ENCODE measurements at regions of chr1 and their contacts with region 1.

Region 1: DNA sequence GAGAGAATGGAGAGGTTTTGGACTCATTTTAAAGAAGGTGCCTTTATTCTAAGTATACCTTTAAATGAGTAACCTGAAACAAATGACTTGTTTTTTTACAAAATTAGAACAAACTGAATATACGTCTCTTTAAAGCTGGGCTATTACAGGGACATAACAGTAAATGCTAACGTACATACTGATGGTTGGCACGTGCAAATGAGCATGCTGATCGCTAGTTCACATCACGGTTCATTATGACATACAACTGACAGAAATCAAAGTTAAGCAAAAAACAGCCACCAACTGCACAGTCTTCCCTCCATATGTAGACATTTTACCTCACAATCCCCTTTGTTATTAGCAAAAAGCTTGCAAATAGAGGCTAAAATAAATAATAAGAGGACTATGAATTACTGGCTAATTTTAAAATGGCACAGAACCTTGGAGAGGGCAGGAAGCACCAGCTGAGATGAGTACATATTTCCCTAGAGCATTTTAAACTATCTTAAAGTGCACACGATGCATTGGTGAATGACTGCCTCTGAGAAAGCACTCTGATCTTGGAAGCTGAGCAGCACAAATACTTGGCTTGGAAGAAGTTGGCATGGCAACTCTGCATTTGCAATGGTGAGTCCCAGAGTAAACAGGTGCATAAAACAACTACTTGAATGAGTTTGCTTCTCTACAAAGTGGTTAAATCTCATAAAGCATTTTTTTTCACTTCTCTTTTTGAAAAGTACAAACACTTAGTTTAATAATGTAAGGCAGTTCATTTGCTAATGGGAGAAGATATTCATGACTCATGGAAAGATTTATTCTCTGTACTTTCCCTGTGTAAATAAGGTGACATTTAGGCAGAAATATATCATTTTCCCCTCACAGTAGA is 204.7 kb downstream of the LHX8 start:
- DNase-seq: peak; percentile 17
- H3K4me3 Mint-ChIP-seq: no peak overlapping the region
- H3K27ac Mint-ChIP-seq: peak overlapping the region; percentile 20
- H3K4me1 Mint-ChIP-seq: peaks cover 4% of the 10 kb centered on the region
- H3K27me3 Mint-ChIP-seq: no peaks in the 10 kb centered on the region

Region 2: GRCh38 chr1:75327395-75327794 is 11.5 kb before region 1 on chr1:
- CTCF ChIA-PET with region 1: no interaction called
- intact Hi-C with region 1: no loop called
- DNase-seq: no peak
- H3K4me3 Mint-ChIP-seq: no peak overlapping the region
- H3K27ac Mint-ChIP-seq: no peak overlapping the region
- H3K4me1 Mint-ChIP-seq: no peaks in the 10 kb centered on the region
- H3K27me3 Mint-ChIP-seq: no peaks in the 10 kb centered on the region

Region 3: DNA sequence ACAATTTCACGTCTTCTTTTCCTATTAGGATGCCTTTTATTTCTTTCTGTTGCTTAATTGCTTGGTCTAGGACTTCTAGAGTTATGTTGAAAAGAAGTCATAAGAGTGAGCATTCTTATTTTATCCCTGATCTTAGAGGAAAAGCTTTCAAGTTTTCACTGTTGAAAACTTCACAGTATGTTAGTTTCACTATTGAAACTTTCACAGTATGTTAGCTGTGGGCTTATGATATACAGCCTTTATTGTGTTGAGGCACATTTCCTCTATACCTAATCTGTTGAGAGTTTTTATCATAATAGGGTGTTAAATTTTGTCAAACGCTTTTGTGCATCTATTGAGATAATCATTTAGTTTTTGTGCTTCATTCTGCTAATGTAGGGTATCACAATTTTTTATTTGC is 22.4 kb after region 1 on chr1:
- CTCF ChIA-PET with region 1: no interaction called
- intact Hi-C with region 1: loop called (anchors 2 kb)
- DNase-seq: no peak
- H3K4me3 Mint-ChIP-seq: no peak overlapping the region
- H3K27ac Mint-ChIP-seq: no peak overlapping the region
- H3K4me1 Mint-ChIP-seq: no peaks in the 10 kb centered on the region
- H3K27me3 Mint-ChIP-seq: no peaks in the 10 kb centered on the region

Region 4: DNA sequence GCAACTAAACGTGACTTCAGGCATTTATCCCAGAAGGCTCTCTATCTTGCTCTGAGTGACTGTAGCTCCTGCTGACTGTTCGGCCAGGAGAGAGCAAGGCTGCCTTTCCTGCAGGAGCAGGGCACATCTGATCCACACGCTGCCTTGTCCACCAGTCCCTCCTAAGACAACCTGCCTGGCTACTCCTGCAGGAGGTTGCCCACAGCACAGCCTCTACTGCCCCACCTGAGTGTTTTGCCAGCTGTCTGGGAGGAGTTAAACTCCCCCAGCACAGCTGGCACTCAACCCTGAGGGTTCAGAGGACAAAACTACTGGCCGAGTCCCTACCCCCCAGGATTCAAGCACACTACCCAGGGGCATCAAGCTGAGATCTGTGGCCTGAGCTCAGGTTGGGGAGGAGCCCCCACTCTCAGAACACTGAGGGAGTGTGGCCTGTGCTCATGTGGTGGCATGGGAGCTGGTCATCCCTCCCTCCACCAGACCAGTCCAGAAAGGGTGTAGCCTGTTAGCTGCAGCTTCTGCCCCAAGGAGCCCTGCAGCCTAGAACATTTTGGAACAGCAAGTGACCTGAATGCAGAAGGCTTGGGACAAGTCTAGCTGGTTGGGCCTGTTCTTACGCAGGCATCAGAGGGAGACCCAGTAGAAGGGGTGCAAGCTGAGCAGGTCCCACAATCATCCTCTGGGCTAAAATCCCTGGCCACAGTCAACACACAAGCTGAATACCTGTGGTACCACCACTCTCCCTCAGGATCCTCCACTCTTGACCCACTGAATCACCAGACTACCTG is 34.9 kb after region 1 on chr1:
- CTCF ChIA-PET with region 1: no interaction called
- intact Hi-C with region 1: loop called (anchors 1 kb)
- DNase-seq: no peak
- H3K4me3 Mint-ChIP-seq: no peak overlapping the region
- H3K27ac Mint-ChIP-seq: no peak overlapping the region
- H3K4me1 Mint-ChIP-seq: no peaks in the 10 kb centered on the region
- H3K27me3 Mint-ChIP-seq: no peaks in the 10 kb centered on the region